ENCODE measurements at regions of chr10 and their contacts with region 1.

Region 1: GRCh38 chr10:12890958-12891357 is 110.6 kb downstream of the CCDC3 start:
- DNase-seq: no peak

Region 2: DNA sequence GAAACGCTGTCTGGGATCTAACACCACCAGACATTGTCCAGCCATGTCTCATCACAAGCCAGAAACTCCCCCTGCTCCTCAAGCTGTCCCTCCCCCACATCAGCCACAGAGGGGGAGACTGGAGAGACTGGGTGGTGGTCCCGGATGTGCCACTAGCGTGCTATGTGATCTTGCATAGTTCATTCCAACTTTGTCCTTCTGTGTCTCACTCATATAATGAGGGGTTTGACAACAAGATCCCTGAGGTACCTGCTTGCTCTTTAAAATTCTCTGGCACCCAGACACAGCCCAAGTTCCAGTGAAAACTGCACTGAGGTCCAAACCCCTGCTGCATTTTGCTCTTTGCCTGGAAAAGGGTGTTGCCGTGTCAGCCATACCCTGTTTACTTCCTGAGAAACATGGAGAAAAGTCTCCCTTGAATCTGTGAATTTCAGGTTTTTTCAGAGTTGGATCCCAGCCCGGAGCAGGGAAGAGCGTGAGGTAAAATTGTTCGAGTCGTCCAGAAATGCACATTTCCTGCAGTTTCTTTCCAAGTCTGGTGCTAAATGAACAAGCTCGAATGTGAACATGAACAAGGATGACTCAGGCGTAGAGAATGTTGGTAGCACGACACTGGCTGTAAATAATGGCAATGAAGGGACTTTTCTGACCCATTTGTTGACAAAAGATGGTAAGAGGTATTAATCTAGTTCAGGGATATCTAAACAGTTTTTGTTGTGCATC is 46.0 kb before region 1 on chr10:
- intact Hi-C with region 1: loop called in 1 of 2 experiments (anchors 5 kb)
- DNase-seq: no peak